H1 (cell line): ENCODE measurements at regions of chr9 and their contacts with region 1.

Region 1: DNA sequence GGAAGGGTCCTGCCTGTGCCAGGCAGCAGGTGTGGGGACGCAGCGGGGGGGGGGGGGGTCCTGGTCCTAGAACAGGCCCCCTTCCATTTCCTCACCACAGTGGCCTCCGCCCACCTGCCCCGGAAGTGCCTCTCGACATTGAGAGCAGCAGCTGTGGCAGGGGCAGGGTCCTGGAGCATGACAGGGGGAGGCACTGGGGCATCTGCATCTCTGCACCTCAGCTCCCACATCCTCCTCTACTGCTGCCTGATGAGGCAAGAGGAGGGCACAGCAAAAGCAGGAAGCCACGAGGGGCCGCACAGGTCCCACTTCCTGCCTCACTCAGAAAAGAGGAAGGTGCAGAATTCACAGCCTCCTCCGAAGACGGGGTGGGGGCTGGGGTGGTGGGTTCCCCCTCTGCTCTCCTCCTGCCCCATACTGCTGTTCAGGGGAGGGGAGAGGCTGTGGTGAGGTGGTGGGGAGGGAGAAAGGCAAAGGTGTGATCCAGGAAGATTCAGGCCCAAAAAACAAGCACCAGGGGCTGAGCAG is 14.8 kb downstream of the AKNA start:
- DNase-seq: no peak
- H3K4me3 ChIP-seq: no peak overlapping the region
- H3K27ac ChIP-seq: no peak overlapping the region
- H3K4me1 ChIP-seq: peaks cover 7 to 30% (median 22%) of the 10 kb centered on the region in 4 experiments
- H3K27me3 ChIP-seq: no peaks in the 10 kb centered on the region
- CTCF ChIP-seq: no peak
- EP300 ChIP-seq: no peak
- POLR2A ChIP-seq: no peak
- RAD21 ChIP-seq: no peak

Region 2: DNA sequence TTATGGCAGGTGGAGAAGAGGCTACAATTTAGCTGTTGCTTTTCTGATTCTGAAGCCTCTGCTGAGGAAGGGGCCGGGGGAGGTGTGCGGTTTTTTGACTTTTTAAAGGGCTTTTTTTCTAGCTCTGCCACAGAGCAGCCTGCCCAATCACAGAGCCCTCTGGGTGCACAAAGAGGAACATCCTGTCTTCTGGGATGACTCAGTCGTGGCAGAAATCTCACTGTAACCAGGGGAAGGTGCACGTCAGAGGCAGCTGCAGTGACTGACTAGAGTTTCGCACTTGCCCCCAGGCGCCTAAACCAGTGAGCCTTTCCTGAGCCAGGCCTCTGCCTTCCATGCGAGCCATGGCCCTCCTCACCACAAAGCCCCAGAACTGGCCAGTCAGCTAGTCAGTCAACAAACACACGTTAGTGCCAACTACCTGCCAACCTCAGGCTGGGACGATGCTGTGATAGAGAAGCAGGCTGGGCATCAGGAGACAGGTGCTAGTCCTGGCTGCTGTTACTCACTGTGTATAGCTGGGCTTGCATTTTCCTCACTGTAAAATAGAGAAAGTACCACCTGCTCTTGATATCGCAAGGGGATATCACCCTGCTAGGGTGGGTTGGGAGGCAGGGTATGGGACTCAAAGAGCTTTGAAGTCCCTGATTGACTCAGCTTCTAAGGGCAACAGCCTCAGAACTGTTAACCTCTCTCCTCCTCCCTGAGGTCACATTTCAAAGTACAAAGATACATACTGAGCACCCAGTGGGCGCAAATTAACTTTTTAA is 12.6 kb after region 1 on chr9:
- CTCF ChIA-PET with region 1: interaction called, 6 read pairs
- POLR2A ChIA-PET with region 1: interaction called, 67 read pairs
- DNase-seq: no peak
- H3K4me3 ChIP-seq: no peak overlapping the region
- H3K27ac ChIP-seq: no peak overlapping the region; the same call in 1 of the 2 replicates
- H3K4me1 ChIP-seq: peaks cover 19 to 55% (median 39%) of the 10 kb centered on the region in 4 experiments
- H3K27me3 ChIP-seq: no peaks in the 10 kb centered on the region; a peak in 1 of 7 replicates
- CTCF ChIP-seq: no peak
- EP300 ChIP-seq: no peak
- POLR2A ChIP-seq: no peak
- RAD21 ChIP-seq: no peak